ENCODE measurements at regions of chr19 and their contacts with region 1.

Region 1: GRCh38 chr19:37466798-37467607 is at the start of gene ZNF569:
- DNase-seq: peak; percentile 91 to 96 (median 93)
- H3K4me3 ChIP-seq: peak within 1 kb of the TSS; percentile 63 to 83
- H3K4me3 Mint-ChIP-seq: peak within 1 kb of the TSS; percentile 95 to 99 (median 97)
- H3K27ac ChIP-seq: peak within 1 kb of the TSS; percentile 74
- H3K27ac Mint-ChIP-seq: peak within 1 kb of the TSS; percentile 95 to 99 (median 98)
- H3K4me1 ChIP-seq: peaks cover 31% of the 10 kb centered on the region
- H3K4me1 Mint-ChIP-seq: peaks cover 28 to 45% (median 35%) of the 10 kb centered on the region in 4 donors
- H3K27me3 ChIP-seq: no peaks in the 10 kb centered on the region
- H3K27me3 Mint-ChIP-seq: no peaks in the 10 kb centered on the region
- total RNA-seq, gene ZNF569: 13.5 to 14.9 TPM

Region 2: GRCh38 chr19:36573020-36573885 is 893.8 kb before region 1 on chr19 and contains the start of gene ZNF529:
- CTCF ChIA-PET with region 1: no interaction called
- POLR2A ChIA-PET with region 1: no interaction called
- intact Hi-C with region 1: loop called (anchors 1 kb)
- DNase-seq: peak; percentile 86 to 98 (median 89)
- H3K4me3 ChIP-seq: peak within 1 kb of the TSS; percentile 70 to 86
- H3K4me3 Mint-ChIP-seq: peak within 1 kb of the TSS; percentile 89 to 98 (median 96)
- H3K27ac ChIP-seq: peak within 1 kb of the TSS; percentile 95
- H3K27ac Mint-ChIP-seq: peak within 1 kb of the TSS; percentile 93 to 100 (median 98)
- H3K4me1 ChIP-seq: peaks cover 22% of the 10 kb centered on the region
- H3K4me1 Mint-ChIP-seq: peaks cover 25 to 39% (median 34%) of the 10 kb centered on the region in 4 donors
- H3K27me3 ChIP-seq: no peaks in the 10 kb centered on the region
- H3K27me3 Mint-ChIP-seq: no peaks in the 10 kb centered on the region
- total RNA-seq, gene ZNF529: 32.8 to 33.5 TPM

Region 3: DNA sequence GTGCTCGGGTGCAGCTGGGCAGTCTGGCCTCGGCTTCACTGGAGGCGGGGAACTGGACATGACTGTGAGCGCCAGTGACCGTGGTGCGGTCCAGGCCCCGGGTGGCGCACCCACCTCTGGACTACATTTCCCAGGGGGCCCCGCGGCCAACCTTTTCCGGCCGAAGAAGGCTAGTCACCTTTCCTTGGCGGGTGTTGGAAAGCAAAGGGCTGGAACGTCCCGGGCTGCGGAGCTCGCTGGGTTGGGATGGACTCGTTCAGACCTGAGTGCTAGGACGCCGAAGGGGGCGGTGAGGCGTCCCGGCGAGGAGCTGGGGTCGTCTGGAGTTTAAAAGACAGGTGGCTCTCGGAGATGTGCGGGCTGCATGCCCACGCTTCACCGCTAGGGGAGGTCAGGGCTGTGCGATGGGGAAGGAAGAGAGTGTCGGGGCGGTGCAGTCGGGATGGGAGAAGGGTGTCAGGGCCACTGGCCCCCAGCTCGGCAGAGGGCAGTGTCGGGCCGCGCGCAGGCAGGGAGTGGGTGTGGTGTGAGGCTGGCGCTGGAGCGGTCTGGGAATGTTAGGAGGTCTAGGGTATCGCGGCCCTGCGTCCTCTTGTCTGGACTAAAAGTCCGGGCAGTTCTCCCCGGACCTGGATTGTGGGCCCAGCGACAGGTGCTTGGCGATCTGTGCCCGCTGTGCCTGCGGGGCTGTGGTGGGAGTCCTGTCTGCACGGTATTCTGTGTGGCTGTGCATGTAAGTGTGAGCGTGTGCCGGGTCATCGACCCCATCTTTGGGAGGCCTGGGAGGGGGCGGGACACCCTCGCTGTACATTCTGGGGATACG is 493.8 kb before region 1 on chr19:
- CTCF ChIA-PET with region 1: interaction called, 3 read pairs
- POLR2A ChIA-PET with region 1: interaction called, 4 read pairs
- intact Hi-C with region 1: loop called (anchors 1 kb)
- DNase-seq: peak; percentile 76 to 85 (median 77)
- H3K4me3 ChIP-seq: peak overlapping the region; percentile 80 to 86
- H3K4me3 Mint-ChIP-seq: peak overlapping the region; percentile 91 to 98 (median 96)
- H3K27ac ChIP-seq: peak overlapping the region; percentile 68
- H3K27ac Mint-ChIP-seq: peak overlapping the region; percentile 82 to 97 (median 94)
- H3K4me1 ChIP-seq: peaks cover 16% of the 10 kb centered on the region
- H3K4me1 Mint-ChIP-seq: peaks cover 8 to 22% (median 12%) of the 10 kb centered on the region in 4 donors
- H3K27me3 ChIP-seq: no peaks in the 10 kb centered on the region
- H3K27me3 Mint-ChIP-seq: no peaks in the 10 kb centered on the region

Region 4: GRCh38 chr19:37334179-37335071 is 132.6 kb before region 1 on chr19:
- CTCF ChIA-PET with region 1: no interaction called
- POLR2A ChIA-PET with region 1: interaction called, 19 read pairs
- intact Hi-C with region 1: loop called (anchors 1 kb)
- DNase-seq: peak; percentile 84 to 96 (median 90)
- H3K4me3 ChIP-seq: peak overlapping the region; percentile 71 to 83
- H3K4me3 Mint-ChIP-seq: peak overlapping the region; percentile 89 to 95 (median 92)
- H3K27ac ChIP-seq: peak overlapping the region; percentile 80
- H3K27ac Mint-ChIP-seq: peak overlapping the region; percentile 89 to 98 (median 95)
- H3K4me1 ChIP-seq: peaks cover 12% of the 10 kb centered on the region
- H3K4me1 Mint-ChIP-seq: peaks cover 20 to 42% (median 31%) of the 10 kb centered on the region in 4 donors
- H3K27me3 ChIP-seq: no peaks in the 10 kb centered on the region
- H3K27me3 Mint-ChIP-seq: no peaks in the 10 kb centered on the region

Region 5: GRCh38 chr19:37594304-37594981 is 127.4 kb after region 1 on chr19 and contains the starts of genes ZNF540 and ZNF571:
- CTCF ChIA-PET with region 1: interaction called, 7 read pairs
- POLR2A ChIA-PET with region 1: interaction called, 64 read pairs
- intact Hi-C with region 1: loop called (anchors 1 kb)
- DNase-seq: peak; percentile 88 to 96 (median 92)
- H3K4me3 ChIP-seq: peak within 1 kb of the TSS; percentile 91 to 92
- H3K4me3 Mint-ChIP-seq: peak within 1 kb of the TSS; percentile 94 to 99 (median 97)
- H3K27ac ChIP-seq: peak within 1 kb of the TSS; percentile 98
- H3K27ac Mint-ChIP-seq: peak within 1 kb of the TSS; percentile 97 to 99 (median 99)
- H3K4me1 ChIP-seq: peaks cover 24% of the 10 kb centered on the region
- H3K4me1 Mint-ChIP-seq: peaks cover 21 to 47% (median 30%) of the 10 kb centered on the region in 4 donors
- H3K27me3 ChIP-seq: no peaks in the 10 kb centered on the region
- H3K27me3 Mint-ChIP-seq: no peaks in the 10 kb centered on the region
- total RNA-seq, gene ZNF540: 24.2 to 24.5 TPM
- total RNA-seq, gene ZNF571: 10.1 to 14.2 TPM

Region 6: DNA sequence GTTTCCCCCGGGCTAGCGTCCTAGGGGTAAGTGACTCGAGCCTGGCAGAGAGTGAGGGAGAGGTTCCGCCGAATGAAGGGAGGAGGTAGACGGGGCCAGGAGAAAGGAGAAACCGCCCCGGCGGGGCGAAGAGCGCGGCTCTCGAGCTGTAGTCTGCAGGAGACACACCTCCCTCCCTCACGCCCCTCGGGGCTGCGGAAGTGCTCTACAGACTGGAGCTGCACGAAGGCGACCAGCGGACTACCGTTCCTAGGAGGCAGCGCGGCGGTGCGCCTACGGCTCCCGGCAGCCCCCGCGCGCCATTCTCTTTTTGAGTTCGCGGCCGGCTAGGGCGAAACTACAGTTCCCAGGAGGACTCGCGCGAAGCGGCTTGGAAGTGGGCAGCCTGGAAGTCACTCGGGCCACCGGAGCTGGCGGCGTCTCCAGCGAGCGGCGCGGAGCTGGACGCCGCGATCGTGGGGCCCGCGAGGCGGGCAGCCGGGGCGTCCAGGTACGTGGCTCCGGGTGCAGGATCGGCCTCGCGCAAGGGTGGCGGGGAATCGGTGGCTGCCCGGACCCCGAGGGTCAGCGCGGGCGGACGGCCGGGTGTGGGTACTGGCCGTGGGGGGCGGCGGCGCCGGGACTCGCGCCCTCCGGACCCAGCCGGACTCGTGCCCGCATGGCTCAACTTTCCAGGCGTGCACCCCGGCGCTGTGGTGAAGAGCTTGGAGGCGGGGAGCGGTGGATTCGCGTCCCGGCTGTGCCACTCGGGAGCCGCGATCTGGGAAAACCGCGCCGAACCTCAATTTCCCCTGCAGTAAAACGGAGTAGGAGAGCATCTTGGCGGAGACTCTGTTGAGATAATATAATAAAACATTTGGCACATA is 440.1 kb after region 1 on chr19 and contains the start of gene SIPA1L3:
- CTCF ChIA-PET with region 1: no interaction called
- POLR2A ChIA-PET with region 1: no interaction called
- intact Hi-C with region 1: loop called (anchors 5 kb)
- DNase-seq: peak; percentile 89 to 92 (median 90)
- H3K4me3 ChIP-seq: peak within 1 kb of the TSS; percentile 63 to 96
- H3K4me3 Mint-ChIP-seq: peak within 1 kb of the TSS; percentile 92 to 96 (median 93)
- H3K27ac ChIP-seq: peak within 1 kb of the TSS; percentile 71
- H3K27ac Mint-ChIP-seq: peak within 1 kb of the TSS; percentile 86 to 95 (median 91)
- H3K4me1 ChIP-seq: peaks cover 22% of the 10 kb centered on the region
- H3K4me1 Mint-ChIP-seq: peaks cover 16 to 36% (median 25%) of the 10 kb centered on the region in 4 donors
- H3K27me3 ChIP-seq: no peaks in the 10 kb centered on the region
- H3K27me3 Mint-ChIP-seq: no peaks in the 10 kb centered on the region
- total RNA-seq, gene SIPA1L3: 31.8 to 35.0 TPM